Right ventricle myocardium inferior (tissue), 1 donor: ENCODE measurements at regions of chr4 and their contacts with region 1.

Region 1: GRCh38 chr4:37452952-37453280 is 208.4 kb downstream of the NWD2 start:
- DNase-seq: no peak
- ATAC-seq: peak; percentile 57

Region 2: DNA sequence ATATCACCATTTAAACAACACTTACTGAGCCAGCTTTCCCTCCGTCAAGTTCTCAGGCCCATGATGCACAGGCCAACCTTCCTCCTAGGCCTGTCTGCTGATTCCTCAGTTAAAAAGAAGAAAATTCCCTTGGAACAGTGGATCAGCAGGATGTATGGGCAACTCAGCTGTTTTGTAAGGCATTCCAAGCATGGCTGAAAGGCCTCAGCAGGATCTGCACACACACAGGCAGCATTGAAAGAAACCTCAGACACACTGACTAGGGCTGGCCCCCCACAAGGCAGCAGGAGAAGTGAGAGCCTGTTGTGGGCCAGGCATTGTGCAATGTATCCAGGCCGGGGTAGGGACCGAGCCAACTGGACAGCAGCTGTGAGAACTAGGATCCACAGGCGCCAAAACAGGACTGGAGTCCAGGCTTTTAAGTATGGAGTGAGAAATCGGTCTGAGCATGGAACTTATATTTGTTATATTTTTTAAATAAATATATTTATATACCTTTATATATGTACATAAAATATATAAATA is 37.0 kb before region 1 on chr4:
- intact Hi-C with region 1: no loop called
- DNase-seq: no peak
- ATAC-seq: no peak

Region 3: DNA sequence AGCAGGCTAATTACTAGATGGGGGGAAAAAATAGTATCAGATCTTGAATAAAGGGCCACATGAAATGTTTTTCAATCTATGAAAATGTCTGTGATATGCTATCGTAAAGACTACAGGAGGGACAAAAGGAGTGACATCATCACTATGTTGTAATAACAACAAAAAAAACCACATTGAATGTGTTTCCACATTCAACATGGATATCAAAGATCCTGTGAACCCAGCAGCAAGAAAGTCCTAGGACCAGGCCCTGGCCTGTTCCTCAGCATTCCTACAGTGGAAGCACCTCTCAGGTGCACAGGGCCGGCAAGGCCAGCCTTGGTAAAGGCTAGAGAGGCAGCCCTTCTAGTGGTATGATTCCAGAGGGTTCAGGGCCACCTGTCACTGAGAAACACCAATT is 114.9 kb after region 1 on chr4:
- intact Hi-C with region 1: loop called (anchors 2 kb)
- DNase-seq: no peak
- ATAC-seq: no peak

Region 4: DNA sequence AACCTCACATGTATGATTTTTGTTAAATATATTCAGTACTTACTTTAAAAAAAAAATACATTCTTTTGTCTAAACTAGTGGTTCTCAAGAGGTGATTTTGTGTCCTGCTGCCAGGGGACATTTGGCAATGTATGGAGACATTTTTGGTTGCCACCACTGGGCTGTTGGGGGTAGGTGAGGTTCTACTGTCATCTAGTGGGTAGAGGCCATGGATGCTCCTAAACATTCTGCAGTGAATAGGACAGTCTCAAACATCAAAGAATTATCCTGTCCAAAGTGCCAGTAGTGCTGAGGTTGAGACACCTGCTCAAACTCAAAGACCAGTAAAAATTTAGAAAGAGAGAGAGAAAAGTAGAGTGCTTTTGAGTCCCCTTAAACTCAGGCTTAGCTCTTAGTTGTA is 340.6 kb after region 1 on chr4:
- intact Hi-C with region 1: loop called (anchors 10 kb)
- DNase-seq: no peak
- ATAC-seq: peak; percentile 82